H1 (cell line): ENCODE measurements at regions of chr7 and their contacts with region 1.

Region 1: DNA sequence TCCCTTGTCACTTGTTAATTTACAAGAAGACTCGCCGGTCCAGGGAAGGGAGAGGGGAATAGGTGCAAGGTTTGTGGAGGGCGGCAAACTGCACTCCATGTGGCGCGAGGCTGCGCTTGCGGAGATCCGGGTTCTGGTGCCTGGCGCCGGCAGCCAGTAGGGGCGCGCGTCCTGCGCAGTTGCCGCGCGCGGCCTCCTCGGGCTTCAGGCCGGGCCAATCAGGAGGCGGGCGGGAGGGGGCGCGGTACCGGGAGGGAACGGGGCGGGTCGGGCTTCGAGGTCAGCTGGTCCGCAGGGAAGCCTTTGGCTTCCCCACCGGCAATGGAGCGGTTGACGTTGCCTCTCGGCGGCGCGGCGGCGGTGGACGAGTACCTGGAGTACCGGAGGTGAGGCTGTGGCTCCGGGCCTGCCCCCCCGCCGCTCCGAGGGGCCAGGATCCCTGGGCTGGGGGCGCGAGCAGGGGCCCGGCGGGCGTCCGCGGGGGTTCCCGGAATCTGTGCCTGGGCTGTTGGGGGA is at the start of gene FAM221A:
- DNase-seq: peak; percentile 80 to 86
- H3K4me3 ChIP-seq: peak within 1 kb of the TSS; percentile 56 to 87 (median 77)
- H3K27ac ChIP-seq: peak within 1 kb of the TSS; percentile 53; the same call in 1 of the 2 replicates
- H3K4me1 ChIP-seq: peaks cover 0 to 2% (median 0%) of the 10 kb centered on the region in 4 experiments; a peak in 3 of 7 replicates
- H3K27me3 ChIP-seq: peaks cover 0 to 3% (median 2%) of the 10 kb centered on the region in 4 experiments; a peak in 2 of 7 replicates
- CTCF ChIP-seq: peak; percentile 71 to 79 (median 76)
- EP300 ChIP-seq: peak in 1 of 2 experiments; percentile 54; a peak in 1 of 3 replicates
- POLR2A ChIP-seq: peak in 1 of 2 experiments; percentile 54; a peak in 1 of 3 replicates
- RAD21 ChIP-seq: peak; percentile 22 to 35; a peak in 2 of 4 replicates
- total RNA-seq, gene FAM221A: 20.3 and 21.5 TPM in 2 replicates

Region 2: GRCh38 chr7:23597094-23598091 is 82.6 kb before region 1 on chr7 and contains the start of gene CCDC126:
- CTCF ChIA-PET with region 1: interaction called, 5 read pairs
- POLR2A ChIA-PET with region 1: interaction called, 14 read pairs
- DNase-seq: peak; percentile 78 to 98
- H3K4me3 ChIP-seq: peak within 1 kb of the TSS; percentile 67 to 87 (median 79)
- H3K27ac ChIP-seq: peak within 1 kb of the TSS; percentile 77
- H3K4me1 ChIP-seq: peaks cover 0 to 2% (median 0%) of the 10 kb centered on the region in 4 experiments; a peak in 3 of 7 replicates
- H3K27me3 ChIP-seq: peaks cover 0 to 11% (median 10%) of the 10 kb centered on the region in 4 experiments; a peak in 6 of 7 replicates
- CTCF ChIP-seq: no peak
- EP300 ChIP-seq: no peak
- POLR2A ChIP-seq: peak in 1 of 2 experiments; percentile 63; a peak in 1 of 3 replicates
- RAD21 ChIP-seq: no peak; a peak in 1 of 4 replicates
- total RNA-seq, gene CCDC126: 4.2 and 5.3 TPM in 2 replicates

Region 3: DNA sequence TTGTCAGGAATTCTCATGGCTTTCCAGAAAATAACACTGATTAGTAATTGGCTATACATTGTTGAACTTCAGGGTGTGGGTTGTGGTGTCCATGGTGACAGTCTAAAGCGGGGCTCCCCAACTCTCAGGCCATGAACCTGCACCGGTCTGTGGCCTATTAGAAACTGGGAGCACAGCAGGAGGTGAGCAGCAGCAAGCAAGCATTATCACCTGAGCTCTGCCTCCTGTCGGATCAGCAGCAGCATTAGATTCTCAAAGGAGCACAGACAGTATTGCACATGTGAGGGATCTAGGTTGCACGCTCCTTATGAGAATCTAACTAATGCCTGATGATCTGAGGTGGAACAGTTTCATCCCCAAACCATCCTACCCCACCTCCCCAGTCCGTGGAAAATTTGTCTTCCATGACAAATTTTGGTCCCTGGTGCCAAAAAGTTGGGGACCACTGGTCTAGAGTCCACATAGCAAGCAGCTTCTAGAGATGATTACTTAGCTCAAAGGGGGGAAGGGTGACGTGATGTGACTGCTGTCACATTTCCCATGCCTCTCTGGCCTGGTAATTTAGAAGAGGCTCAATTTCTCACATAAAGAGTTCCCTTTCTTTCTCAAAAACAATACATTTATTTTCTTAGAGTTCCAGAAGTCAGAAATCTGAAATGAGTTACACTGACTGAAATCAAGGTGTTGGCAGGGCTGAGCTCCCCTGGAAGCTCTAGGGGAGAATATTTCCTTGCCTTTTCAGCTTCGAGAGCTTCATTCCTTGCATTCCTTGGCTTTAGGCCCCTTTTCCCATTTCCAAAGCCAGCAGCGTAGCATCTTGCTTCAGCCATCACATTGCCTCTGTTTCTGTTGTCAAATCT is 17.6 kb before region 1 on chr7:
- CTCF ChIA-PET with region 1: interaction called, 13 read pairs
- POLR2A ChIA-PET with region 1: interaction called, 27 read pairs
- DNase-seq: no peak
- H3K4me3 ChIP-seq: peak overlapping the region in 1 of 4 experiments; percentile 23; a peak in 1 of 8 replicates
- H3K27ac ChIP-seq: peak overlapping the region; percentile 66; the same call in 1 of the 2 replicates
- H3K4me1 ChIP-seq: peaks cover 6 to 16% (median 12%) of the 10 kb centered on the region in 4 experiments
- H3K27me3 ChIP-seq: no peaks in the 10 kb centered on the region
- CTCF ChIP-seq: peak in 2 of 3 experiments; percentile 5 to 25; a peak in 2 of 4 replicates
- EP300 ChIP-seq: no peak
- POLR2A ChIP-seq: 0 out of 3 replicates have a peak, but pooled peaks of 1 of the 2 experiments have one; percentile 39
- RAD21 ChIP-seq: no peak